HEK293T (cell line): ENCODE measurements at regions of chr20 and their contacts with region 1.

Region 1: DNA sequence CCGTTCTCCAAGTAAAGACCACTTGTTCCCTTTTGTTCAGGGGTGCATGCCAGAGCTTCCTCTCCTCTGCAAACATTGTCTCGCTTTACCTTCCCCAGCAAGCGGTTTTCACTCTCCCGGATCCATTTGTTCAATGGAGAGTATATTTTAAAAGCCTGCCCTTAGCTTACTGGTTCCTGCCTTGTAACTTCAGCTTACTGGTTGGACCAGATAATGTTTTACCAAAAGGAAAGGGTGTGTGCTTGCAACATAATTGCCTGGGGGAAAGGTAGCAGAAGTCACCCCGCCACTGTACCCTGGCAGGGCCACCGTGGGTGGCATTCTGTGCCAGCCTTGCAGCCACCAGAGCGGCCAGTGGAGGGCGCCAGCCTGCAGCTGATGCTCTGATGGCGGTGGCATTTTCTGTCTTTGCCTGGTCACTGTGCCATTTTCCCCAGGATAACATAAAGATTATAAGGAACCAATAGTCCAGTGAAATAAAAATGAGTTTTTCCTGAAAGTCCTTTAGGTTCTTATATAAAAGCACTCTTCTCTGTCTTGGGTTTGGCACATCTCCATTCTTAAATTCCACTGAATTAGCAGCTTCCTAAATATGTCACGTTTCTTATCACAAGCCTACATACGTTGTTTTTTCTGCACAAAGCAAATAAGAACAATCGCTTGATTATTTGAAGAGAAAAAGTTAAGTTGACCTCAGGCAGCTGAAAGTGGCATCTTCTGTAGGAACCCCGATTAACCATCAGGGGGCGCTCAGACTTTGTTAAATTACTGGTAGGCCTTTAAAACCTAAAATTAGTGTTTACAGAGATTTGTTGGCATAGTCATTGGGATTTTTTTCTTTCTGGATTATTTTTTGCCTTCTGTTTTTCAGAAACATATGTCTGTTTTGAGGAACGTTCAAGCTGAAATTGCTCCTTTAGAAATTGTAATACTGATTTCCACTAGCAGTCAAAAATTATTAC is 67.4 kb upstream of the XRN2 start:
- DNase-seq: peak; percentile 59

Region 2: GRCh38 chr20:21490095-21490494 is 254.3 kb after region 1 on chr20:
- CTCF ChIA-PET with region 1: interaction called, 15 read pairs
- POLR2A ChIA-PET with region 1: no interaction called
- DNase-seq: no peak

Region 3: DNA sequence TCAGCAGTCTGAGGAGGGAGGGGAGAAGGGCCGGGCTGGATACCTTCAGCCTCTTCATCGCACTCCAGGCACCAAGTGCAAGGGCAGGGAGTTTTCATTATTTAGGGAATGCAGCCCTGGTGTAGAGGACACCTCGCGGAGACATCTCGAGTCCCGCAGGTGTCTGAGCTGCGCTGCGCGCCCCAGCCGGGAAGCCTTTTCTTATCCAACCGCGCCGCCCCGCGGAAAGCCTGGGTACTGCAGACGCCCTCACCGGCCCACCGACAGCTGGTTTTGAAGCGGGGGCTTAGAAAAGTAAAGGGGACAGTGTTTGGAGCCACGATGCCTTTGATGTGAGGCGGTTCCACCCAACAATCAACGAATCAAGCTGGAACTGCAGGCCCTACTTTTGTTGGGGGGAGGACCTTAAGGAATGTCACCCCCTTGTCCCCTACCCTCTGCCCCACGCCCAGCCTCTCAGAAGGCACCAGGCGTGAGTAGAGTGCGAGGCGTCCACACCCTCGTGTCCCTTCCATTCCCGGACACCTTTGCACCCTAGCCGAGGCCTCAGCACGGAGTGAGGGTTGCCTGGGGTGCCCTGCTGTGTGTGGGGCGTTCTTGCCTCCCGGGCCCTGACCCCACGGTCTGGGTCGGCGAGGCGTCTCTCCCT is 269.5 kb after region 1 on chr20:
- CTCF ChIA-PET with region 1: interaction called, 28 read pairs
- POLR2A ChIA-PET with region 1: no interaction called
- DNase-seq: peak; percentile 82

Region 4: DNA sequence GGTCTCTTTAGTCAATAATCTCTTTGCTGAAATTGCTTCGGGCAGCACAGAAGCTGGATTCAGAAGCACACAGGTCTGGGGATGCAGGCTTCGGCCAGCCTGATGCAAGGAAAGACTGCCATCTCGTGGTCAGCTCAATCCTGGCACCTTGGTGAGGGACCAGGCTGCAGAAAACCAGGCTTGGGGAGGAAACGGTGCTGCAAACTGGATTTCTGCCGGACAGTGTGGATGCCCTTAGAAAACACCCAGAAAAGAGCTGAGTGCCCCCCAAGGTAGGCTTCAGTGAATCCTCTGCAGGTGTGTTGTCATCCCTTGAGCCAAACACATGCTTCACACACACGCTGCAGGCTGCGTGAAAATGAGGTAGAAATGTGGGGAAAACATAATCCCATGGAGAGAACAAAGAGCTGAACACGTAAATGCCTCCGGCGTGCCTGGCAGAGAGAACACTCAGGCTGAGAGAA is 379.9 kb after region 1 on chr20:
- CTCF ChIA-PET with region 1: interaction called, 16 read pairs
- POLR2A ChIA-PET with region 1: no interaction called
- DNase-seq: peak; percentile 82